Right ventricle myocardium inferior (tissue), 1 donor: ENCODE measurements at regions of chr13 and their contacts with region 1.

Region 1: DNA sequence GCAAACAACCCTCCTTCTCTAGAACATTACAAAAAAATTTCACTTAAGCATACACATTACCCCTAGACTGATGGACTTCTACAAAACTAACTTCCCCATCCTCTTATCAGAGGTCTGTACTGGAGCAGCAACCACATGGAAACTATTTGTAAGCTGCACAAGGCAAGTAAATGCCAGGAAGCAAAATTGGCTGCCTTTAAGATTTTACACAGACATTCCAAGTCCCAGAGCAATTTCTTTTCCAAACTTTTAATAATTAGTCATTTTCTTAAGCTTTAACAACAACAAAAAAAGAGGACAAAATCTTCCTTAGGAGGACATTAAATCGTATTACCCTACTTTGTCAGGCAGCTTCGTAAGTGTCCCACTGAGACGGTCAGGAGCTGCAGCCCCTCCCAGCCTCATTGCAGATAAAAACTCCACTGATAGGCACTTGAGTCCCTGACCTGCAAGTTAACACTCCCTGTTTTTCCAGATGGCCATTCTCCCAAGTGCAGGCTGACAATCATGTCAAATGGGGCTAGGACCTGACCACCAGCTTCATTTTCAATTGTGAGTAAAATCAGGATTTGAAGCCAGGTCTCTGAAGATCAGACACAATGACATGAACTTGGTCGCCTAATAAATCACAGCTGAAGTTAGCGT is 680.1 kb downstream of the DIAPH3 start:
- DNase-seq: peak; percentile 50
- ATAC-seq: peak; percentile 81

Region 2: GRCh38 chr13:59425211-59425721 is 58.4 kb before region 1 on chr13:
- intact Hi-C with region 1: no loop called
- DNase-seq: no peak
- ATAC-seq: no peak

Region 3: DNA sequence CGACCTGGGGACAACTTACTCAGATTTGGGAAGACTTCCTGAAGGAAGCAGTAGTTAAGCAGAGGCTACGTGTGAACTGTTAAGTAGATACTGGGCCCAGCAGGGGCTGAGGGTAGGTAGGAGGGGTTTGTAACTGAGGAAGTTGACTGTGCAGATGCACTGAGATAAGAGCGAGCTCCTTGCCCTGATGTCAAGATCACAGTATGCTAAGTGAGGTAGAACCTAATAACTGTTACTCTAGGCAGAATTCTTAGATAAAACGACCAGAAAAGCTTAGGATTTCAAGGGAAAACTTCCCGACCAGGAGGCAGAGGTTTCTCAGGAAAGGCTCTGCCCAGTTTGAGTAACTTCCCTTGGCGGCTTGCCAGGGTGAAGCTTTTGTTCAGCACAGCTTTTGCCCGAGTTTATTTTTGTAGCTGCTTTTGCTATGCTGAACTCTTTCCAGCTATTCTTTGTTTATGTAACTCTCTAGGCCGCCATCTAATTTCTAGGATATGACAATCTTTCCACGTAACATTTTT is 48.0 kb after region 1 on chr13:
- intact Hi-C with region 1: loop called (anchors 5 kb)
- DNase-seq: peak; percentile 89
- ATAC-seq: peak; percentile 75

Region 4: DNA sequence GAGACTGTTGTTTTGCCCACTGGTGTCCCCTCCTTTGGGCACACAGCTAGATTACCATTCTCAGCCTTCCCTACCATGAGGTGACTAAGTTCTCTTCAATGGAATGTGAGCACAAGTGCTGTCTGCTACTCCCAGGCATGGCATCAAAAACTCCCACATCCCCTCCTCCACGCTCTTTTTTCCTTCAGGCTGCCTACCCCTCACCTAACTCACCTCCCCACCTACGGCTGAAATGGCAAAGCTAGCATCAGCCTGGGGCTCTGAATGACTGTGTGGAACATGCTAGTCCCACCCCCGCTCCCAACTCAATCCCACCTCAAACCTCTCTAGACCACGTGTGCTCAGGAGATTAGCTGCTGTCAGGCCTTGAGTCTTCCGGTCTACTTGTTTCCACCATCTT is 167.9 kb after region 1 on chr13:
- intact Hi-C with region 1: no loop called
- DNase-seq: no peak
- ATAC-seq: no peak

Region 5: DNA sequence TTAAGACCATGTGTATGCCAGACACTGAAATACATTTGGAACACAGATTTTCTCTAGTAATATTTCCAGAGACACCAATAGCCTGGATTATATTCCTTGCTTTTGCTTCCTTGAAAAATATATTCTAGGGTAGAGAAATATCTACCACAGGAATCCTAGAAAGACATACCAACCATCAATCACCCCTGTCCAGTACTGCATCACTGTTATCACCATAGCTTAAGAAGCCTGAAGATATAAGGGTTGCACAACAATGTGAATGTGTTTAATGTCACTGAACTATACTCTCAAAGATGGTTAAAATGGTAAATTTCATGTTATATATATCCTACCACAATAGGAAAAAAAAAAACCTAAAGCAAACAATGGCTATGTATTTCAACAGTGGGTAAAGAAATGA is 516.5 kb after region 1 on chr13:
- intact Hi-C with region 1: no loop called
- DNase-seq: no peak
- ATAC-seq: no peak